ENCODE measurements at regions of chr7 and their contacts with region 1.

Region 1: GRCh38 chr7:104530251-104530650 is 201.8 kb downstream of the LHFPL3 start:
- DNase-seq: no peak
- H3K4me3 ChIP-seq: no peak overlapping the region
- H3K27ac ChIP-seq: no peak overlapping the region
- H3K4me1 ChIP-seq: no peaks in the 10 kb centered on the region
- H3K27me3 ChIP-seq: no peaks in the 10 kb centered on the region
- CTCF ChIP-seq: no peak
- EP300 ChIP-seq: no peak
- POLR2A ChIP-seq: no peak

Region 2: GRCh38 chr7:103630318-103630717 is 899.9 kb before region 1 on chr7:
- intact Hi-C with region 1: loop called in 1 of 4 experiments (anchors 5 kb)
- DNase-seq: no peak
- H3K4me3 ChIP-seq: no peak overlapping the region
- H3K27ac ChIP-seq: no peak overlapping the region
- H3K4me1 ChIP-seq: no peaks in the 10 kb centered on the region
- H3K27me3 ChIP-seq: no peaks in the 10 kb centered on the region
- CTCF ChIP-seq: no peak
- EP300 ChIP-seq: no peak
- POLR2A ChIP-seq: no peak

Region 3: GRCh38 chr7:104351012-104351411 is 179.2 kb before region 1 on chr7:
- intact Hi-C with region 1: no loop called
- DNase-seq: no peak
- H3K4me3 ChIP-seq: no peak overlapping the region
- H3K27ac ChIP-seq: no peak overlapping the region
- H3K4me1 ChIP-seq: no peaks in the 10 kb centered on the region
- H3K27me3 ChIP-seq: no peaks in the 10 kb centered on the region
- CTCF ChIP-seq: no peak
- EP300 ChIP-seq: no peak
- POLR2A ChIP-seq: no peak

Region 4: DNA sequence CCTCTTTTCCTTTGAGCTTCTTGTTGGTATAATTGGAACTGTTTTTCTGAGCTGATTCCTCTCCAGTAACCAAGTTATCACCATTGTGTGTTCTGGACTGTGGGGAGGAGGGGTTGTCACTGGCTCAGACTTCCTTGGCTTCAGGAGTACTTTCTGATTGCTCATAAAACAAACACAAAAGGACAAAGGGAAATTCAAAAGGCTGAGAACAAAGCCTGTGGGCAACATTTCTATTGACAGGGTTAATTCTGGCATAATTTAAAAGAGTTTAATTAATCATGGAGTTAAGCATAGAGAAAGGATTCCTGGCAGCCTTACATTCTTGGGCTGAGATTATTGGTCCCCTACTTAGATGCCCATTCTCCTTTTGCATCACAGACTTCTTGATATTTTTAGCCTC is 260.8 kb after region 1 on chr7:
- intact Hi-C with region 1: no loop called
- DNase-seq: no peak
- H3K4me3 ChIP-seq: no peak overlapping the region
- H3K27ac ChIP-seq: no peak overlapping the region
- H3K4me1 ChIP-seq: no peaks in the 10 kb centered on the region
- H3K27me3 ChIP-seq: no peaks in the 10 kb centered on the region
- CTCF ChIP-seq: no peak
- EP300 ChIP-seq: no peak
- POLR2A ChIP-seq: no peak

Measured in ovary (tissue), 10 donors.